HCT116 (cell line): ENCODE measurements at regions of chr17 and their contacts with region 1.

Region 1: GRCh38 chr17:42428141-42428944 is 5.3 kb upstream of the CAVIN1 start:
- DNase-seq: peak; percentile 88
- ATAC-seq: peak; percentile 86
- H3K4me3 ChIP-seq: peak overlapping the region in 1 of 2 experiments; percentile 18; a peak in 1 of 4 replicates
- H3K27ac ChIP-seq: peak overlapping the region; percentile 61
- H3K4me1 ChIP-seq: peaks cover 26 to 60% of the 10 kb centered on the region in 2 experiments
- H3K27me3 ChIP-seq: no peaks in the 10 kb centered on the region
- CTCF ChIP-seq: peak; percentile 69 to 78 (median 77); a peak in 5 of 6 replicates
- POLR2A ChIP-seq: no peak
- RAD21 ChIP-seq: peak; percentile 67

Region 2: DNA sequence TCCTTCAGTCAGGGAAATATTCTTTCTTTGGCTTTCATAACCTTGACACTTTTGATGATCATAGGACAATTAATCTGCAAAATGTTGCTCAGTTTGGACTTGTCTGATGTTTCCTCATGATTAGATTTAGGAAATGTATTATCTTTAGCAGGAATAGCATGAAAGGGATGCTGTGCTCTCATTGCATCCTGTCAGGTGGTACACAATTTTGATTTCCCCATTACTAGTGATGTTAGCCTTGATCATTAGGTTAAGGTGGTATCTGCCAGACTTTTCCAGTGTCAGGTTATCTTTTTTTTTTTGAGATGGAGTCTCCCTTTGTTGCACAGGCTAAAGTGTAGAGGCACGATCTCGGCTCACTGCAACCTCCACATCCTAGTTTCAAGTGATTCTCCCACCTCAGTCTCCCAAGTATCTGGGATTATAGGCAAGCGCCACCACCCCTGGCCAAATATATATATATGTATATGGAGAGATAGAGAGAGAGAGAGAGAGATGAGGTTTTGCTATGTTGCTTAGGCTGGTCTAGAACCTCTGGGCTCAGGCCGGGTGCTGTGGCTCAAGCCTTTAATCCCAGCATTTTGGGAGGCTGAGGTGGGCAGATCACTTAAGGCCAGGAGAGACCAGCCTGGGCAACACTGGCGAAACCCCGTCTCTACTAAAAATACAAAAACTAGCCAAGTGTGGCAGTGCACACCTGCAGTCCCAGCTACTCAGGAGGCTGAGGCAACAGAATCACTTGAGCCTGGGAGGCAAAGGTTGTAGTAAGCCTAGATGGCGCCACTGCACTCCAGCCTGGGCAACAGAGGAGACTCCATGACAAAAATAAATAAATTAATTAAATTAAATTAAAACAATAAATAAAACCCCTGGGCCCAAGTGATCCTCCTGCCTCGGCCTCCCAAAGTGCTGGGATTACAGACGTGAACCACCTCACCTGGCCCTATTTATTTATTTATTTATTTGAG is 10.5 kb after region 1 on chr17:
- CTCF ChIA-PET with region 1: interaction called, 15 read pairs
- POLR2A ChIA-PET with region 1: interaction called, 6 read pairs
- RAD21 ChIA-PET with region 1: no interaction called
- intact Hi-C with region 1: no loop called
- DNase-seq: no peak
- ATAC-seq: peak; percentile 97
- H3K4me3 ChIP-seq: no peak overlapping the region
- H3K27ac ChIP-seq: no peak overlapping the region
- H3K4me1 ChIP-seq: peaks cover 0 to 18% of the 10 kb centered on the region in 2 experiments; a peak in 3 of 4 replicates
- H3K27me3 ChIP-seq: no peaks in the 10 kb centered on the region
- CTCF ChIP-seq: peak; percentile 42 to 64 (median 62); a peak in 5 of 6 replicates
- POLR2A ChIP-seq: no peak
- RAD21 ChIP-seq: peak; percentile 53

Region 3: DNA sequence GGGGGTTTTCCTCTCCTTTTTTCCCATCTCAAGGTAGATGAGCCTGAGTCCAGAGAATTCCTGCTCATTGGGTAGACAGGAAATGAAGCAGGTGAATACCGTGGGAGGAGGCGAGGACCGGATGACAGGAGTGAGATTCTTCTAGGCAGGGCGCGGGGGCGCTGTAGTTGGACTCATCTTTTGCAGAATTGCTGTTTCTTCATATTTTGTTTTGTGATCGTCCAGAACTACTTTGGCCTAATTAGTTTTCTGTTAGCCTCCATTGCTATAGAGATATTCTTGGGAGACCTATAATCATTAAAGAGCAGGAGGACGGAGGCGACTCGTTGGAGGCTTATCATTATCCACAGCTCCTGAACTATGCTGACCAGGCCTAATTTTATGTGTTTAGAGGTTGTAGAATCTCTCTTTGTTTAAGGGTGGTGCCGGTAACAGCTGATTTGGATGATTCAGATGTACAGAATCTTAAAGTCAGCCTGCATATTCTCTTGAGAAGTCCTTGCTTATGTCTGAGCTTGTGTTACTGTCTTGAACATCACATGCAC is 31.0 kb after region 1 on chr17:
- CTCF ChIA-PET with region 1: interaction called, 3 read pairs
- POLR2A ChIA-PET with region 1: no interaction called
- RAD21 ChIA-PET with region 1: no interaction called
- intact Hi-C with region 1: loop called (anchors 1 kb)
- DNase-seq: no peak
- ATAC-seq: peak; percentile 75
- H3K4me3 ChIP-seq: peak overlapping the region; percentile 78 to 99
- H3K27ac ChIP-seq: peak overlapping the region; percentile 65
- H3K4me1 ChIP-seq: peaks cover 13 to 25% of the 10 kb centered on the region in 2 experiments
- H3K27me3 ChIP-seq: no peaks in the 10 kb centered on the region
- CTCF ChIP-seq: peak; percentile 25 to 56 (median 41); a peak in 5 of 6 replicates
- POLR2A ChIP-seq: no peak
- RAD21 ChIP-seq: peak; percentile 23; the same call in 1 of the 2 replicates

Region 4: DNA sequence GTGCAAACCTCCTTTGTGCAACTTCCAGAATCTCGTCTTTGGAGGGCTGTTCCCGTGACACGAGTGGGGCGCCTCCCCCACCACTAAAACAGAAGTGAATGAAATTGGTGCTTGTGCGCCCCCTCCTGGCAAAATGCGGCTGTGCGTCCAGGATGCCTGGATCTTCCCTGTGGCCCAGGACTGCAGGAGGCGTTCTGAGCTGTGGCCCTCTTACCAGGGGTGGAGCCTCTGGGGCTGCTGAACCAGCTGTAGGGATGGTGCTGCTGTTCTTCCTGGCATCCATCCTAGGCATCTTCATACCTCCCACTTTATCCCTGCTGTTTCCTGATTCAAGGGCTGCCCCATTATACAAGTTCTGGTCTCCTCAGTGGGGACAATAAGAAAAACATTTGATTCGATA is 89.2 kb after region 1 on chr17:
- CTCF ChIA-PET with region 1: interaction called, 9 read pairs
- POLR2A ChIA-PET with region 1: interaction called, 28 read pairs
- RAD21 ChIA-PET with region 1: no interaction called
- intact Hi-C with region 1: loop called (anchors 2 kb)
- DNase-seq: peak; percentile 56
- ATAC-seq: peak; percentile 75
- H3K4me3 ChIP-seq: no peak overlapping the region
- H3K27ac ChIP-seq: peak overlapping the region; percentile 93
- H3K4me1 ChIP-seq: peaks cover 39 to 52% of the 10 kb centered on the region in 2 experiments
- H3K27me3 ChIP-seq: no peaks in the 10 kb centered on the region
- CTCF ChIP-seq: peak; percentile 95 to 98 (median 97)
- POLR2A ChIP-seq: no peak
- RAD21 ChIP-seq: peak; percentile 91

Region 5: GRCh38 chr17:42527273-42527703 is 98.9 kb after region 1 on chr17:
- CTCF ChIA-PET with region 1: interaction called, 11 read pairs
- POLR2A ChIA-PET with region 1: interaction called, 4 read pairs
- RAD21 ChIA-PET with region 1: interaction called, 3 to 7 read pairs
- intact Hi-C with region 1: no loop called
- DNase-seq: peak; percentile 69
- ATAC-seq: peak; percentile 92
- H3K4me3 ChIP-seq: no peak overlapping the region
- H3K27ac ChIP-seq: no peak overlapping the region
- H3K4me1 ChIP-seq: peaks cover 27 to 66% of the 10 kb centered on the region in 2 experiments
- H3K27me3 ChIP-seq: no peaks in the 10 kb centered on the region
- CTCF ChIP-seq: peak; percentile 86 to 95 (median 91)
- POLR2A ChIP-seq: no peak
- RAD21 ChIP-seq: peak; percentile 97

Region 6: GRCh38 chr17:42577532-42578281 is 149.4 kb after region 1 on chr17 and contains the start of gene PSMC3IP:
- CTCF ChIA-PET with region 1: no interaction called
- POLR2A ChIA-PET with region 1: no interaction called
- RAD21 ChIA-PET with region 1: no interaction called
- intact Hi-C with region 1: no loop called
- DNase-seq: peak; percentile 87
- ATAC-seq: peak; percentile 86
- H3K4me3 ChIP-seq: peak within 1 kb of the TSS; percentile 72 to 99
- H3K27ac ChIP-seq: peak within 1 kb of the TSS; percentile 95
- H3K4me1 ChIP-seq: peaks cover 10 to 15% of the 10 kb centered on the region in 2 experiments
- H3K27me3 ChIP-seq: no peaks in the 10 kb centered on the region
- CTCF ChIP-seq: peak in 2 of 3 experiments; percentile 23 to 42; a peak in 2 of 6 replicates
- POLR2A ChIP-seq: peak; percentile 87
- RAD21 ChIP-seq: no peak
- total RNA-seq, gene PSMC3IP: 24.3 TPM

Region 7: DNA sequence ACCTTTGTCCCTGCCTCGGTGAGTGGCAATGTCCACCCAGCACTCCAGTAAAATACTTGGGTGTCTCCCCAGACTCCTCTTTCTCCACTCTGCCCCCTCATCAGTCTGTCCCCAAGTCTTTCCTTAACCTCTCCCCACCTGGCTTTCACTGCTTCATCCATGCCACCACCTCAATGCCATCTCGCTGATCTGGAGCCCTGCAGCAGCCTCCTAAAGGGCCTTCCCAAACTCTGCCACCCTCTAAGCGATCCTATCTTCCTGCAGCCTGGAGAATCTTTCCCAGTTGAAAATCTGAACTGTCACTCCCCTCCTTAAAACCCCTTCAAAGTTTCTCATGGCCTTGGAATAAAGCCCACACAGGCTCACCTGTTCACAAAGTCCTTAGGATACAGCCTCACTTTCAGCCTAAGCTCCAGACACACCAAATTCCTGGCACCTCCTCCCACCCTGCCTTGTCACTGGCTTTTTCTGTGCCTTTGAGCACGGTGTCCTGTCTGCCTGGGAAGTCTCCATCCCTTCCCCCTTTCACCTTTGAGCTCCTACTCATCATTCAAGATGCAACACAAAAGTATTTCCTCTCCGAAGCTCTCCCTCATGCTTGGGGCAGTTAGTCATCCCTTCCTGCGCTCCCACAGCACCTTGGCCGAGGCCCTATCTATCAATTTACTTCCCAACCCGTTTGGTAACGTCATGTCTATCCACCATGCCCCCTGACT is 354.9 kb after region 1 on chr17:
- CTCF ChIA-PET with region 1: no interaction called
- POLR2A ChIA-PET with region 1: no interaction called
- RAD21 ChIA-PET with region 1: no interaction called
- intact Hi-C with region 1: no loop called
- DNase-seq: no peak
- ATAC-seq: peak; percentile 48; the same call in 1 of the 2 replicates
- H3K4me3 ChIP-seq: peak overlapping the region in 1 of 2 experiments; percentile 30; a peak in 1 of 4 replicates
- H3K27ac ChIP-seq: no peak overlapping the region
- H3K4me1 ChIP-seq: peaks cover 3 to 20% of the 10 kb centered on the region in 2 experiments; a peak in 3 of 4 replicates
- H3K27me3 ChIP-seq: no peaks in the 10 kb centered on the region
- CTCF ChIP-seq: no peak
- POLR2A ChIP-seq: no peak
- RAD21 ChIP-seq: no peak